ENCODE measurements at regions of chr12 and their contacts with region 1.

Region 1: GRCh38 chr12:111451649-111452129 is 46.0 kb downstream of the SH2B3 start:
- DNase-seq: no peak

Region 2: DNA sequence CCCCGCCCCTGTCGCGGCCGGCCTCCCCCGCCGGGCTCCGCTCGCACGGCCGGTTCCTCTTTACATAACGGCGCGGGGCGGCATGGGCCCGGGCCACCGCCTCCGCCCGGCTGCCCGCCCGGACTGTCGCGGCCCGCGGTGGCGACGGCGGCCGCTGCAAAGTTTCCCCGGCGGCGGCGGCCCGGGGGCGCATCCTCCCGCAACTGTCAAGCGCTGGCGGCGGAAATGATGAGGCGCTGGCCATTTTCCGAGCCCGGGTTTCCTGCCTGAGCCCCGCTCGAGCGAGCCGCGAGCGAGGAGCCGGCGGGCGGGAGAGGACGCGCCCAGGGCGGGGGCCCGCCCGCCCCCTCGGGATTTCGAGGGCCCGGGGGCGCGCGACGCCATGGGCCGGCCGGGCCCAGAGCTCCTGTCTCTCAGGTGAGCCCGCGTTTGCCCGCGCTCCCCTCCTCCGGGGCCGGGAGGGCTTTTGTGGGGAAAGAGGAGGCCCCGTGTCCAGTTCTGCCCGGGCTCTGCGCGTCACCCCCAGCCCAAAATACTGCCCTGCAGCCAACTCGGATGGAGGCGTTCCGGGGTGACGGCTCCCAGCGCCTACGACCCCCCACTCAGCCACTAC is 45.7 kb before region 1 on chr12 and contains the start of gene SH2B3:
- intact Hi-C with region 1: loop called (anchors 2 kb)
- DNase-seq: no peak

Measured in posterior cingulate gyrus (tissue), 11 donors.